ENCODE measurements at regions of chr16 and their contacts with region 1.

Region 1: GRCh38 chr16:78705694-78706093 is 606.2 kb downstream of the WWOX start:
- DNase-seq: peak; percentile 82
- ATAC-seq: peak; percentile 91
- H3K4me3 ChIP-seq: no peak overlapping the region
- H3K27ac ChIP-seq: no peak overlapping the region
- H3K4me1 ChIP-seq: peaks cover 20% of the 10 kb centered on the region
- H3K27me3 ChIP-seq: no peaks in the 10 kb centered on the region
- CTCF ChIP-seq: peak; percentile 89
- EP300 ChIP-seq: peak in 1 of 2 experiments; percentile 4; a peak in 1 of 4 replicates
- POLR2A ChIP-seq: no peak
- RAD21 ChIP-seq: peak; percentile 87

Region 2: GRCh38 chr16:77896415-77897128 is 809.1 kb before region 1 on chr16:
- CTCF ChIA-PET with region 1: no interaction called
- POLR2A ChIA-PET with region 1: no interaction called
- in situ Hi-C with region 1: no loop called
- intact Hi-C with region 1: no loop called
- DNase-seq: no peak
- ATAC-seq: no peak
- H3K4me3 ChIP-seq: no peak overlapping the region
- H3K27ac ChIP-seq: no peak overlapping the region
- H3K4me1 ChIP-seq: no peaks in the 10 kb centered on the region
- H3K27me3 ChIP-seq: no peaks in the 10 kb centered on the region; a peak in 1 of 5 replicates
- CTCF ChIP-seq: no peak
- EP300 ChIP-seq: no peak
- POLR2A ChIP-seq: no peak
- RAD21 ChIP-seq: no peak

Region 3: DNA sequence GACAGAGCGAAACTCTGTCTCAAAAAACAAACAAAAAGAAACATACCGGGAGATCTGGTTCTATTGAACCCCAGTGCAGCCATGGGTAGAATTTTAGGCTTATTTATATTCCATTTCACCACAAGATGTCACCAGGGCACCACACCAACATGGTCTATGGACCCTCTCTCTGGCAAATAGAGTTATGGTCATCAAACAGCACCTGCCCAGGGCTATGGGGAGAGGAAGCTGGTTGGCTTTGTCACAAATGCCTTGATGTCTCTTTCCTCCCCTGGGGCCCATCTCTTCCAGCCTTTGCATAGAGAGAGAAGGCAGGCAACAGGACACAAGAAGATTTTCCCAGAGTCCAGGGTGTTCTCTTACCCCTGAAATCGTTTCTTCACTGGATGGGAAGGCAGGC is 477.8 kb before region 1 on chr16:
- CTCF ChIA-PET with region 1: no interaction called
- POLR2A ChIA-PET with region 1: no interaction called
- in situ Hi-C with region 1: no loop called
- intact Hi-C with region 1: loop called (anchors 5 kb)
- DNase-seq: peak; percentile 74
- ATAC-seq: peak; percentile 98
- H3K4me3 ChIP-seq: no peak overlapping the region
- H3K27ac ChIP-seq: no peak overlapping the region
- H3K4me1 ChIP-seq: peaks cover 30% of the 10 kb centered on the region
- H3K27me3 ChIP-seq: no peaks in the 10 kb centered on the region
- CTCF ChIP-seq: peak; percentile 87
- EP300 ChIP-seq: no peak
- POLR2A ChIP-seq: no peak
- RAD21 ChIP-seq: peak; percentile 86

Region 4: GRCh38 chr16:78729687-78730086 is 24.0 kb after region 1 on chr16:
- CTCF ChIA-PET with region 1: no interaction called
- POLR2A ChIA-PET with region 1: interaction called, 9 read pairs
- in situ Hi-C with region 1: no loop called
- intact Hi-C with region 1: loop called (anchors 1 kb)
- DNase-seq: peak; percentile 82
- ATAC-seq: peak; percentile 64
- H3K4me3 ChIP-seq: no peak overlapping the region
- H3K27ac ChIP-seq: peak overlapping the region; percentile 58
- H3K4me1 ChIP-seq: peaks cover 82% of the 10 kb centered on the region
- H3K27me3 ChIP-seq: no peaks in the 10 kb centered on the region
- CTCF ChIP-seq: no peak
- EP300 ChIP-seq: peak; percentile 70 to 82; a peak in 3 of 4 replicates
- POLR2A ChIP-seq: no peak
- RAD21 ChIP-seq: no peak

Region 5: GRCh38 chr16:78770353-78771091 is 64.8 kb after region 1 on chr16:
- CTCF ChIA-PET with region 1: interaction called, 46 read pairs
- POLR2A ChIA-PET with region 1: interaction called, 8 read pairs
- in situ Hi-C with region 1: loop called (anchors 5 kb)
- intact Hi-C with region 1: loop called (anchors 1 kb)
- DNase-seq: peak; percentile 67
- ATAC-seq: peak; percentile 94
- H3K4me3 ChIP-seq: peak overlapping the region in 1 of 3 experiments; percentile 40; a peak in 1 of 6 replicates
- H3K27ac ChIP-seq: no peak overlapping the region
- H3K4me1 ChIP-seq: peaks cover 30% of the 10 kb centered on the region
- H3K27me3 ChIP-seq: no peaks in the 10 kb centered on the region
- CTCF ChIP-seq: peak; percentile 96
- EP300 ChIP-seq: no peak
- POLR2A ChIP-seq: no peak
- RAD21 ChIP-seq: peak; percentile 89

Region 6: GRCh38 chr16:78836802-78837491 is 131.3 kb after region 1 on chr16:
- CTCF ChIA-PET with region 1: no interaction called
- POLR2A ChIA-PET with region 1: no interaction called
- in situ Hi-C with region 1: no loop called
- intact Hi-C with region 1: no loop called
- DNase-seq: no peak
- ATAC-seq: no peak
- H3K4me3 ChIP-seq: no peak overlapping the region
- H3K27ac ChIP-seq: no peak overlapping the region
- H3K4me1 ChIP-seq: no peaks in the 10 kb centered on the region
- H3K27me3 ChIP-seq: no peaks in the 10 kb centered on the region
- CTCF ChIP-seq: no peak
- EP300 ChIP-seq: no peak
- POLR2A ChIP-seq: no peak
- RAD21 ChIP-seq: no peak

Region 7: GRCh38 chr16:79047229-79047983 is 341.7 kb after region 1 on chr16:
- CTCF ChIA-PET with region 1: no interaction called
- POLR2A ChIA-PET with region 1: no interaction called
- in situ Hi-C with region 1: loop called (anchors 10 kb)
- intact Hi-C with region 1: loop called (anchors 1 kb)
- DNase-seq: peak; percentile 29
- ATAC-seq: peak; percentile 80
- H3K4me3 ChIP-seq: no peak overlapping the region
- H3K27ac ChIP-seq: no peak overlapping the region
- H3K4me1 ChIP-seq: no peaks in the 10 kb centered on the region
- H3K27me3 ChIP-seq: no peaks in the 10 kb centered on the region
- CTCF ChIP-seq: peak; percentile 60
- EP300 ChIP-seq: no peak
- POLR2A ChIP-seq: no peak
- RAD21 ChIP-seq: peak; percentile 35; the same call in 1 of the 2 replicates

Region 8: GRCh38 chr16:79601931-79602627 is 896.4 kb after region 1 on chr16:
- CTCF ChIA-PET with region 1: no interaction called
- POLR2A ChIA-PET with region 1: no interaction called
- in situ Hi-C with region 1: no loop called
- intact Hi-C with region 1: loop called (anchors 1 kb)
- DNase-seq: peak; percentile 76
- ATAC-seq: peak; percentile 46
- H3K4me3 ChIP-seq: peak overlapping the region; percentile 44 to 67 (median 50); a peak in 5 of 6 replicates
- H3K27ac ChIP-seq: no peak overlapping the region
- H3K4me1 ChIP-seq: peaks cover 28% of the 10 kb centered on the region
- H3K27me3 ChIP-seq: peaks cover 9 to 29% of the 10 kb centered on the region in 2 experiments
- CTCF ChIP-seq: peak; percentile 82
- EP300 ChIP-seq: no peak
- POLR2A ChIP-seq: no peak
- RAD21 ChIP-seq: peak; percentile 53; the same call in 1 of the 2 replicates

Measured in HepG2 (cell line).